ENCODE measurements at regions of chr17 and their contacts with region 1.

Region 1: DNA sequence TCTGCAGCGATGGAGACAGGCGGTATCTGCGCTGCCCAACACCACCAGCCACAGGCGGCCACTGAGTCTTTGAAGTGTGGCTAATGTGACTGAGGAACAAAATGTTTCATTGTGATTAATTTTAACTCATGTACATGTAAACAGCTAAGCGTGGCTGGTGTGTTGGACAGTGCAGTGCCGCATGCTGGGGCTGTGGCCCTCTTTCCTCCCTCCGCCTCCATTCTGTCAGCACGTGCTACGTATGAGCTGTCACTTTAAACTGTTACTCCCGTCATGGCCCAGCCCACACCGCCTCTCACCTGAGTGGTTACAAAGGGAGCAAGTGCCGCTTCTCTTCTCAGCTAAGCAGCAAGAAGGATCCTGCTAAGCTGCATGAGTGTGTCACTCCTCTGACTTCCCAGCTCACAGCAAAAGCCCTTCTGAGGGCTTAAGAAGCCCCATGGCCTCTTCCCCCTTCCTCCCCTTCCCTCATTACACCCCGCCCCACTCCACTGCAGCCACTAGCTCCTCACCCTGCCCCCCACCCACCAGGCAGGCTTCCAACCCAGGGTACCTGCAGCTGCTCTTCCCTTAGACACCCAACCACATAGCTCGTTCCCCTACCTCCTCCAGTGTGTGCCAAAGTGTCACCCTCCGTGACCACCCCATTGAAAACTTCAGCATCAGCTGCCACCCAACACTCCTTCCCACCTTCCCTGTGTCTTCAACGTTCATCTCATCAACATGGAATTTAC is 15.0 kb downstream of the HASPIN start:
- DNase-seq: no peak
- H3K4me3 ChIP-seq: no peak overlapping the region
- H3K27ac ChIP-seq: no peak overlapping the region
- H3K4me1 ChIP-seq: peaks cover 0 to 3% of the 10 kb centered on the region in 2 experiments; a peak in 1 of 4 replicates
- H3K27me3 ChIP-seq: no peaks in the 10 kb centered on the region
- CTCF ChIP-seq: no peak
- EP300 ChIP-seq: no peak
- RAD21 ChIP-seq: no peak

Region 2: GRCh38 chr17:3502466-3502865 is 236.3 kb before region 1 on chr17:
- CTCF ChIA-PET with region 1: no interaction called
- POLR2A ChIA-PET with region 1: no interaction called
- DNase-seq: no peak
- H3K4me3 ChIP-seq: no peak overlapping the region
- H3K27ac ChIP-seq: no peak overlapping the region
- H3K4me1 ChIP-seq: no peaks in the 10 kb centered on the region
- H3K27me3 ChIP-seq: peaks cover 25% of the 10 kb centered on the region
- CTCF ChIP-seq: no peak
- EP300 ChIP-seq: no peak
- RAD21 ChIP-seq: no peak

Region 3: DNA sequence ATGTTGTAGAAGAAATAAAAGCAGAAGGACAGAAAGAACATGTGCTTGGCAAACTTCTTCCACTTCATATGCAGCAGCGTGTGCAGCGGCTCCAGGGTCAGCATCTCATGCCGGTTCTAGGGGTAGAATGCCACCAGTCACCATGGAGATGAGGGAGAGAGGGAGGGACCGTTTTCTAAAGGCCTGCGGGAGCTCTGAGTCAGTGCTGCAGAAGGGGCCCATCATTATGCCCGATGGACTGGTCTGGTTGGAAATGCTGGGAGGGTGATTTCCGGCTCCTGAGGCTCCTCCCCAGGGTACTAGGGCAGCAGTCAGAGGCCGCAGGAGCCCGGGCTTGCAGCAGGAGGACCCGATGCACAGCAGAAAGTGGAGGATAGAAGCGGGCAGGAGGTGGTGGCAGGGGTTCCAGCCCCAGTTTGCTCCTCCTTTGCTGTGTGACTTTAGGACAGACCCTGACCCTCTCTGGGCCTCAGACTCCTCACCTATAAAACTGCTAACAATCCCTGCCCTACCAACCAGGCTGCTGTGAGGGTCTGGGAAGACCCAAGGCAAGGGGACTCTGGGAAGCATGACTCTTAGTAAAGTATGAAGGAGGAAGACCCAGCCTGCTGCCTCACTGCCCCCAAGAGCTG is 209.7 kb before region 1 on chr17:
- CTCF ChIA-PET with region 1: no interaction called
- POLR2A ChIA-PET with region 1: no interaction called
- DNase-seq: no peak
- H3K4me3 ChIP-seq: no peak overlapping the region
- H3K27ac ChIP-seq: no peak overlapping the region
- H3K4me1 ChIP-seq: no peaks in the 10 kb centered on the region
- H3K27me3 ChIP-seq: no peaks in the 10 kb centered on the region
- CTCF ChIP-seq: no peak
- EP300 ChIP-seq: no peak
- RAD21 ChIP-seq: no peak

Region 4: GRCh38 chr17:3657874-3658783 is 80.6 kb before region 1 on chr17:
- CTCF ChIA-PET with region 1: no interaction called
- POLR2A ChIA-PET with region 1: no interaction called
- DNase-seq: no peak
- H3K4me3 ChIP-seq: no peak overlapping the region
- H3K27ac ChIP-seq: no peak overlapping the region
- H3K4me1 ChIP-seq: peaks cover 0 to 13% of the 10 kb centered on the region in 2 experiments; a peak in 3 of 4 replicates
- H3K27me3 ChIP-seq: no peaks in the 10 kb centered on the region
- CTCF ChIP-seq: no peak
- EP300 ChIP-seq: no peak
- RAD21 ChIP-seq: no peak

Region 5: DNA sequence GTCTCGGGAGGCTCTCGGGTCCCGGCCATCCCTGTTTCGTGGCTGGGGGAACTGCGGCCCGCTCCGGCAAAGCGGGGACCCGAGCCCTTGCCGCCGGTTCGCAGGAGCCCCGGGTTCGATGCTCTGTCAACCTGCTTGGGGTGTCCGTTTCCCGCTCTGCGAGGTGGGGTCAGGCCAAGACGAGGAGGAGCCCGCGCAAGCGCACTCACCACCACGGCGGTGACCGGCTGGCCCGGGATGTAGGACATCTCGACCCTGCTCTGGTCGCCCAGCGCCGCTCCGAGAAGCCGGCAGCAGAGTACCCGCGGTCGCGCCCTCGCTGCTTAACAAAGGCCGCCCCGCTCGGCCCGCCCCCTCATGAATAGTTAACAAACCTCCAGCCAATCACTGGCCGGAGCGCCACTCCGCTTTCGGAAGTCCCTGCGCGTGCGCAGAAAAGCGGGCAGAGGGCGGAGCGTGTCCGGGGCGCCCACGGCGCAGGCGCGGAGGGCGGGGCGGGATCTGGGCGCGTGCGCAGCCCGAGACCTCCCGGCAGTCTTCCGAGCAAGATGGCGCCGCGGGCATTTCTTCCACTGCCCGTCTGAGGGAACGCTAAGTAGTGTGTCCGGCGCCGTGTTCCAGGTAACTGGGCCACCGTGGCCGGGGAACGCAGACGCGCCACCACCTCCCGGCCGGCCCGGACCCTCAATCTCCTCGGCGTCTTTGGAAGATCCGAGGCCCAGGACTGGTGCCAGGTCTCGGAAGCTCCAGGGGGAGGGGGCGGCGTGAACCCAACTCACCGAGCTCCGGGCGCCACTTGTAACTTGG is 70.2 kb before region 1 on chr17 and contains the starts of genes EMC6 and TAX1BP3:
- CTCF ChIA-PET with region 1: no interaction called
- POLR2A ChIA-PET with region 1: no interaction called
- DNase-seq: peak; percentile 99
- H3K4me3 ChIP-seq: peak within 1 kb of the TSS; percentile 91 to 96
- H3K27ac ChIP-seq: peak within 1 kb of the TSS; percentile 98
- H3K4me1 ChIP-seq: peaks cover 0 to 20% of the 10 kb centered on the region in 2 experiments; a peak in 1 of 4 replicates
- H3K27me3 ChIP-seq: no peaks in the 10 kb centered on the region
- CTCF ChIP-seq: no peak
- EP300 ChIP-seq: no peak
- RAD21 ChIP-seq: no peak
- polyA plus RNA-seq, gene EMC6: 56.6 and 64.4 TPM in 2 replicates
- polyA plus RNA-seq, gene TAX1BP3: 165 and 192 TPM in 2 replicates

Region 6: GRCh38 chr17:3754458-3755334 is 16.0 kb after region 1 on chr17:
- CTCF ChIA-PET with region 1: interaction called, 26 read pairs
- POLR2A ChIA-PET with region 1: no interaction called
- DNase-seq: peak; percentile 79
- H3K4me3 ChIP-seq: no peak overlapping the region
- H3K27ac ChIP-seq: no peak overlapping the region
- H3K4me1 ChIP-seq: no peaks in the 10 kb centered on the region; a peak in 1 of 4 replicates
- H3K27me3 ChIP-seq: no peaks in the 10 kb centered on the region; the same call in 1 of the 2 replicates
- CTCF ChIP-seq: no peak
- EP300 ChIP-seq: no peak
- RAD21 ChIP-seq: no peak

Region 7: DNA sequence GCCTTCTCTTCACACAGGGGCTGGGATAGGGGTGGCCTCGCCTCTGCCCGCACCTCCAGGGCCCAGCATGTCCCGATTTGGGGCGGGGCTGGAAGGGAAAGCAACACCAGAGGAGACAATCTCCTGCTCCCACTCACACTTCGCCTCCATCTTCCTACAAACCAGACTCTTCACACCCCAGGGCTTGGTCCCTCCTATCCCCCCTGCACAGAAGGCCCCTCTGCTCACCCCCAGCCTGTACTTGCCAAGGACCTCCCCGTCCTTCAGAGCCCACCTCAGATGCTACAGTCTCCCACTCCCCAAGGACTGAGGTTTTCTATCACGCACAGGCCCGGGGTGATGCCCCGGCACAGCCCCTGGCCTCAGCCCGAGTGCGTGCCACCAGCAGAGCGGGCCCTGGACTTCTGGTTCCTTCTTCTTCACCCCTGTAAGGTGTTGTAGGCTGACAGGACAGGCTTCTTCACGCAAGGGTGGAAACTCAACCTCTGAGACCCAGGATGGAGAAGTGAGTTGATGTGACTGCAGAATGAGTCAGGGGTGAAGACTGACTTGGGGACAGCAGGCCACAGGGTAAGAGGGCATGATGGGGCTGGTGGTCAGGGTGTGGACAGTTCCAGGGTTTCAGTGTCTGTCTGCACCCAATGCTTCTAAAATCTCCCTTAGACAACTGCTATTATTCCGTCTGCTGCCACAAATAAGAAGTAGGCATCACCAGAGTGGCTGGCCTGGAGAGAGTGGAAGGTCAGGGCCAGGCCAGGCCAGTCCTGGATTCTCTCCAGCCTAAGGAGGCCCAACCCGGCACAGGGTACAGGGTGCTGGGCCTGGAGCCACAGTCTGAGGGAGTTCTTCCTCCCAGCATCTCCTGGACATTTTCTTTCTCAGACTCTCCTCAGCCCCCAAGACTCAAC is 59.8 kb after region 1 on chr17:
- CTCF ChIA-PET with region 1: interaction called, 11 read pairs
- POLR2A ChIA-PET with region 1: no interaction called
- DNase-seq: no peak
- H3K4me3 ChIP-seq: no peak overlapping the region
- H3K27ac ChIP-seq: no peak overlapping the region
- H3K4me1 ChIP-seq: peaks cover 0 to 11% of the 10 kb centered on the region in 2 experiments; a peak in 1 of 4 replicates
- H3K27me3 ChIP-seq: no peaks in the 10 kb centered on the region
- CTCF ChIP-seq: no peak
- EP300 ChIP-seq: no peak
- RAD21 ChIP-seq: no peak

Region 8: DNA sequence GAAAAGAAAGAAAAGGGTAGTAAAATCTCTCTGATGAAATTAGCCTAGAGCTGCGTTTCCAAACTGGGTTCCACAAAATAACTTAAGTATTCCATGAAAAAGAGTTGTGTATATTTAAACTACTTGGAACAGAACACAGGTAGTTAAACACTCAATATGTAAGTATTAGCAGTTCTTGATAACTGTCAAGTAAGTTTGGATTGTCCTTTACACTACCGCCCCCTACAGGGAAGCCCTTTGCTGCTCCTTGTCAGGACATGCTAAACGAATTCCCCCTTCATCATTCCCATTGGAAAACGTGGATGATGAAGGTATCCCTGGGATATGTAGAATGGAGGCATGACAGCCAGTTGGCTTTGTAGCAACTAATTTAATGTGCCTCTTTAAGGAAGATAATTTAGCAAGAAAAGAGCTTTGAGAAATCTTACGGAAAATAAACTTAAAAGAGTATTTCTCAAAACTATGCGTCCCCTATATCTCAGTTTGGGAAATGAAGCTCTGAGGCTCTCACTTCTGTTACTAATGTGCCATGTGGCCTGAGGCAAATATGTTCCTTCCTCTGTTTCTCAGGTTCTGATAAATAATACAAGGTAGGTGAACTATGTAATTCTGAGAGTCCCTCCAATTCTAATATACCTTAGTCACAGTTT is 88.5 kb after region 1 on chr17:
- CTCF ChIA-PET with region 1: interaction called, 71 read pairs
- POLR2A ChIA-PET with region 1: no interaction called
- DNase-seq: peak; percentile 61
- H3K4me3 ChIP-seq: no peak overlapping the region
- H3K27ac ChIP-seq: no peak overlapping the region
- H3K4me1 ChIP-seq: no peaks in the 10 kb centered on the region
- H3K27me3 ChIP-seq: no peaks in the 10 kb centered on the region
- CTCF ChIP-seq: peak; percentile 86
- EP300 ChIP-seq: no peak
- RAD21 ChIP-seq: peak; percentile 69

Region 9: GRCh38 chr17:3845621-3846441 is 107.1 kb after region 1 on chr17 and contains the start of gene NCBP3:
- CTCF ChIA-PET with region 1: interaction called, 19 read pairs
- POLR2A ChIA-PET with region 1: interaction called, 5 read pairs
- DNase-seq: peak; percentile 98
- H3K4me3 ChIP-seq: peak within 1 kb of the TSS; percentile 85 to 96
- H3K27ac ChIP-seq: peak within 1 kb of the TSS; percentile 83 to 89
- H3K4me1 ChIP-seq: peaks cover 3 to 9% of the 10 kb centered on the region in 2 experiments; a peak in 3 of 4 replicates
- H3K27me3 ChIP-seq: no peaks in the 10 kb centered on the region
- CTCF ChIP-seq: peak; percentile 81
- EP300 ChIP-seq: peak in 1 of 2 experiments; percentile 44; a peak in 1 of 4 replicates
- RAD21 ChIP-seq: no peak
- polyA plus RNA-seq, gene NCBP3: 6.5 and 9.5 TPM in 2 replicates